ENCODE measurements at regions of chr2 and their contacts with region 1.

Region 1: DNA sequence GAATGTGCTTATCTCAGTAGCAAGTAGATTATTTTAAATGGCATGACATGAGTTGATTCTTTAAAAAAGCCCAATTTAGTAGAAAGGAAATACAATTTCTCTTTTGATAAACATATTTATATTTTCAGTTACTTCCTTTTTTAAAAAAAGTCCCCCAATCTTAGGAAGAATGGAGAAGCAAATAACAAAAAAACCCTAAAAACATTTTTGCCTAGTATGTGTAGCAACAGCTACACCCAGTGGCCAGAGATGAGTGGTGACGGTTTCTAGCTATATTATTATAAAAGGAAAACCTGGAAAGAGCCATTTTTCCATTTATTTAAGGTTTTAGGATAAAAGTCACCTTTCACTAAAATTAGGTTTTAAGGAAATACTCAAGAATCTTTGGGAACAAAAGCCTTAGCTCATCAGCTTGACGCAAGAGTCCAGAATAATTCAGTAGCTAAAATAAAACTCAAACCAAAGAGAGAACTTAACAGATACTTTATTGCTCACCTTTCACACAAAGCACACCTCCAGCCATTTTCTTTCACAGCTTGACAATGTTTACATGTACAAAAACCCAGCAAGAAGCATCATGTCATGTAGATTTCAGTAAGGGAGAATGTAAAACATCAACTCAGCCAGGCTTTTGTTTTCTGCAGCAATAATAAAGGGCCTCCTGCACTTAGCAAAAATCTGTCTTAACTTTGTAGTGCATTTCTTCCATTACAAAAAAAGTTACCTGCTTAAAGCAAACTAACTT is 15.7 kb downstream of the FAM98A start:
- DNase-seq: peak; percentile 30
- ATAC-seq: no peak
- H3K4me3 Mint-ChIP-seq: no peak overlapping the region
- H3K27ac Mint-ChIP-seq: peak overlapping the region; percentile 32
- H3K4me1 Mint-ChIP-seq: peaks cover 7% of the 10 kb centered on the region
- H3K27me3 Mint-ChIP-seq: no peaks in the 10 kb centered on the region
- CTCF ChIP-seq: peak; percentile 92

Region 2: GRCh38 chr2:33412920-33413319 is 170.4 kb before region 1 on chr2:
- CTCF ChIA-PET with region 1: interaction called, 5 read pairs
- POLR2A ChIA-PET with region 1: no interaction called
- intact Hi-C with region 1: loop called (anchors 10 kb)
- DNase-seq: no peak
- ATAC-seq: no peak
- H3K4me3 Mint-ChIP-seq: no peak overlapping the region
- H3K27ac Mint-ChIP-seq: no peak overlapping the region
- H3K4me1 Mint-ChIP-seq: no peaks in the 10 kb centered on the region
- H3K27me3 Mint-ChIP-seq: peaks cover 7% of the 10 kb centered on the region
- CTCF ChIP-seq: no peak

Region 3: DNA sequence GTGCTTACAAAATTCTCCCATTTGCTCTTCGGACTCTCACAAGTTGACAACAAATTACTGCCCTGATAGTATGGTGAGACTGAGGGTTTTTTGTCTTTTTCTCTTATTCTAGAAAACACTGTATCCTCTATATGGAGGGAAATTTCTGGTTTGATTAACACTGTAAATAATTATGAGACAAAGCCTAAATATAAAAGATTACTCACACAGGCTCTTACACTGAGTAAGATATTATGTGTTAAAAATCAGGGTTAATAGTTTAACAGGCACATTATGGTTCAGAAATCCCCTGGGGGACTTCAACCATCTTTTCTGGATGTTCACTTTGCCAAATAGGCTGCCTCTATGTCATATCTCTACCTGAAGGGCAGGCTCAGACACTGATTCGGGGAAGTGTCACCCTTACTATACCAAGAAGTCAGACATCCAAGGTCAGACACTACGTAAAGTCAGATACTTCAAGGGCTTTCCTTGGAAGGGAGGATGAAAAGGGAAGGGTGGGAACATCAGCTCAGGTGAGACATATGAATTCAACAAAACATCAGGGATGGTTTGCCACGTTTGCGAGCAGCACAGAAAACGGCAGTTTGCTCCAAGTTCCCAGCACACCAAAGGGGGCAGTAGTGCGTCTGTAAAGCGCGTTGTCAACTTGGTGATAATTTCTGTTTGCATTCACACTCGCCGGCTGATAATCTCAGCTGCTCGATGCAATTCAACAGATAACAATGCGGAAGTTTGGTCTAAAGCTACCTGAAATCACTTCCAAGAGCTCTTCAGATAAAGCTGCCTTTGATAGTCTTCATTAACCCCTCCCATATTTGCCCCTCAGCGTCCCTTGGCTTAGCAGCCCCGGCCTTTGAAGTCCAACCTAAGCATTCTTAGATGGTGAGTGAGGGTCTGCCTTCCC is 107.9 kb before region 1 on chr2:
- CTCF ChIA-PET with region 1: interaction called, 17 read pairs
- POLR2A ChIA-PET with region 1: interaction called, 3 read pairs
- intact Hi-C with region 1: loop called (anchors 1 kb)
- DNase-seq: peak; percentile 89
- ATAC-seq: peak; percentile 75
- H3K4me3 Mint-ChIP-seq: peak overlapping the region; percentile 80
- H3K27ac Mint-ChIP-seq: peak overlapping the region; percentile 96
- H3K4me1 Mint-ChIP-seq: peaks cover 29% of the 10 kb centered on the region
- H3K27me3 Mint-ChIP-seq: no peaks in the 10 kb centered on the region
- CTCF ChIP-seq: peak; percentile 74

Region 4: DNA sequence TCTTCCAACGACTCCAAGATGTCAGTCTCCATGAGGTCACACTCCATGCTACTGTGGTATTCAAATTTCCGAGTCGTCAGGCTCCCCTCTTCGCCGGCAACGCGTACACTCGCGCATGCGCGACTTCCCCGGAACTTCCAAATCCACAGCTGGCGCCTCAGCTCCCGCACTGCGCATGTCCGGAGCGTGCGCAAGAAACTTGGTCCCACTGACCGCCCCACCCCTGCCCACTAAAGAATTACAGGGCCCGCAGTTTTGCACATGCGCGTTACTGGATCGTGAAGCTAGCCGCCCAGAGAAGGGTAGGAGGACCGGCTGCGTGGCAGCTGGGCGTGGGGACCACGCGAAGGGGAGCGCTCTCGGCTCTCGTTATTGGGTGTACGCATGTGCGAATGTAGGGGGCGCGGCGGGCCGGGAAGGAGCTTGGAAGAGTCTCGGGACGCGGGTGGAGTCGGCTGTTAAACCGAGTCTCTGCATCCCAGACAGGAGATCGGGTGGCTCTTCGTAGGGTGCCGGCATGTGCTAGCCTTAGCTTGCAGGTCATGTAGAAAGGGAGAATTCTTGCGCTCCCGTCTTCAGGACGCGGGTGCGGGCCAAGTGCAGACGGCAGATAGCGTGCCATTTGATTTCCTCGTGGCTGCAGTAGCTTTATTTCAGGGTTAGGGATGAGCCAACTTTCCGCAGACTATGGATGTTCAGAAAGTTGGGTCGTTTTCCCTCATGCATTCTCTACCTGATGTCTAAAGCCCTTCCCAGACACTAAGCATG is 16.0 kb after region 1 on chr2 and contains the start of gene FAM98A:
- CTCF ChIA-PET with region 1: interaction called, 24 read pairs
- POLR2A ChIA-PET with region 1: interaction called, 6 read pairs
- intact Hi-C with region 1: no loop called
- DNase-seq: peak; percentile 98
- ATAC-seq: peak; percentile 94
- H3K4me3 Mint-ChIP-seq: peak within 1 kb of the TSS; percentile 95
- H3K27ac Mint-ChIP-seq: peak within 1 kb of the TSS; percentile 92
- H3K4me1 Mint-ChIP-seq: peaks cover 25% of the 10 kb centered on the region
- H3K27me3 Mint-ChIP-seq: no peaks in the 10 kb centered on the region
- CTCF ChIP-seq: no peak
- total RNA-seq, gene FAM98A: 52.3 to 63.0 TPM